Heart right ventricle (tissue), 16 donors: ENCODE measurements at regions of chr1 and their contacts with region 1.

Region 1: DNA sequence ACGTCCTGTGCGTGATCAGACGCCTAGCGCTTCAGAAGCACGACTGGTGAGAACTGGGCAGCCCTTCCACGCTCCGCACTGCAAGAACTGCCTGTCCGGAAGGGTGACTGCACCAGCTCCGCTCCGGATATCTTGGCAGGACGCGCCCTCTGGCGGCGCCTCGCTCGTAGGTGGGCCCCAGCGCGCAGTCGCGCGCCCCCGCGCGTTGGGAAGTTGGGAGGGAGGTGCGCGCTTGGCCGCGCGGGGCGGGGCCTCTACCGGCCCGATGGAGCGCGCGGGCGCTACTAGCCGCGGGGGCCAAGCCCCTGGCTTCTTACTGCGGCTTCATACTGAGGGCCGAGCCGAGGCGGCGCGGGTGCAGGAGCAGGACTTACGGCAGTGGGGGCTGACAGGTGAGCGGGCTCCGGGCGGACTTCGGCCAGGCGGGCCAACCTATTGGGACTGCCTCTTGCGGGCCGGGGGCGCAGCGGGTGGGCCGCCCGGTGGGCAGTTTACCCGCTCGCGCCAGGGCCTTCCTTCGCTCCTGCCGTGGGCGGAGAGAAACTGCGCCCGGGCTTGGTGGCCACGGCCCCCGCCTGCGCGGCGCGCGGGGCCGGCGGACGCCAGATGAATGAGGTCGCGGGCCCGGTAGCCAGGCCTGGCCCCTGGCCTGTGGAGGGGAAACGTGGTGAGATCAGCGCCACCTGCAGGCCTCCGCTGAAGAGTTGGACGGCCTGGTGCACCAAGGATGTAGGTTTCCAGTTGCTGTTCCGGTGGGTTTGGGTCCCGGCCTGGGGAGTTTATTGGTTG is at the start of gene CHD1L:
- DNase-seq: peak; percentile 94 to 96
- ATAC-seq: peak; percentile 97 to 99 (median 98)
- H3K4me3 ChIP-seq: peak within 1 kb of the TSS; percentile 71 to 99 (median 91)
- H3K27ac ChIP-seq: peak within 1 kb of the TSS; percentile 21 to 97 (median 91)
- H3K4me1 ChIP-seq: peaks cover 0 to 47% (median 19%) of the 10 kb centered on the region in 9 donors
- H3K27me3 ChIP-seq: no peaks in the 10 kb centered on the region
- CTCF ChIP-seq: peak; percentile 63 to 94 (median 84)
- total RNA-seq, gene CHD1L: 6.0 to 12.9 (median 7.9) TPM

Region 2: GRCh38 chr1:147172168-147172992 is 70.3 kb before region 1 on chr1 and contains the start of gene PRKAB2:
- intact Hi-C with region 1: loop called (anchors 1 to 5 kb)
- DNase-seq: peak; percentile 96
- ATAC-seq: peak; percentile 95 to 99 (median 97)
- H3K4me3 ChIP-seq: peak within 1 kb of the TSS; percentile 58 to 99 (median 90)
- H3K27ac ChIP-seq: peak within 1 kb of the TSS; percentile 74 to 98 (median 94)
- H3K4me1 ChIP-seq: peaks cover 3 to 60% (median 47%) of the 10 kb centered on the region in 9 donors
- H3K27me3 ChIP-seq: no peaks in the 10 kb centered on the region
- CTCF ChIP-seq: peak; percentile 84 to 100 (median 96)
- total RNA-seq, gene PRKAB2: 23.2 to 40.2 (median 34.9) TPM

Region 3: DNA sequence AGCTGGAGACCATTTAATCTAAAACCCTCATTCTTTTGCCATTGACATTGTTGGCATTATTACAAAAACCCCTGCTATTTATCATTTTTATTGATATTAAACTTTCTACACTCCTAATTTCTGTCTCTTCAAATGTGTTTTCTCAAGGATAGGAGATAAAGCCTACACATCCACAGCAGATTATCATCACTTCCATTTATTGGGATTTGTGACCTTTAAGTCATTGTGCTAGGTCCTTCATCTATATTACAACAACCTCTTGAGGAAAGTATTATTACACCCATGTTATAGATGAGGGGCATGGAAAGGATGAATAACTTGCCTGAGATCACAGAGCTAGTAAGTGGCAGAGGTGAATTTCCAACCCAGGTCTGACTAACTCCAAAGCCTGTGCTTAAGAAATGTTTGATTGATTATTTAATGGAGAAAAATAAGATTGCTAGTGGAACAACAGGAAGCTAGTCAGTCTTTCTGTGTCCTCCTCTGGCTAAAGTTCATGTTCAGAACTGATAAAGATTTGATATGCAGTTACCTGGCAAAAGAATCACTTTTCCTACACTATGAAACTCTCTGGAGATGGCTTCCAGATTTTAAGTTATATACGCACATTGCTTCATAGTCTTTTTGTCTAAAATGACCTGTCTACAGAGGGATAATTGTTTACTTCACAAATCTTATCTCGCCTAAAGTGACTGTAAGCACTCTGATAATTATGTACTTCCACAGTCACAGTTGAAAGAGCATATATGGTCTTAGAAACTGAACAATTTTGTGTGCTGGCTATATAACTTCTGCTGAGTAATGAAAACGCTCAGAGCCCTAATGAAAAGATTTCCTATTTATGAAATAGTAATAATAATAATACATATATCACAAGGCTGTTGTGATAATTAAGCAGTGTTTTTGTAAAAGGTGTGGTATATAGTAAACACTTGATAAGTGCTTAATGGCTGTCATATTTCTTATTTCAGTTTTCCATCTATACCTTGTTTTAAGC is 32.5 kb before region 1 on chr1:
- intact Hi-C with region 1: loop called in 1 of 10 experiments (anchors 2 kb)
- DNase-seq: no peak
- ATAC-seq: no peak
- H3K4me3 ChIP-seq: no peak overlapping the region
- H3K27ac ChIP-seq: no peak overlapping the region
- H3K4me1 ChIP-seq: no peaks in the 10 kb centered on the region
- H3K27me3 ChIP-seq: no peaks in the 10 kb centered on the region
- CTCF ChIP-seq: no peak

Region 4: DNA sequence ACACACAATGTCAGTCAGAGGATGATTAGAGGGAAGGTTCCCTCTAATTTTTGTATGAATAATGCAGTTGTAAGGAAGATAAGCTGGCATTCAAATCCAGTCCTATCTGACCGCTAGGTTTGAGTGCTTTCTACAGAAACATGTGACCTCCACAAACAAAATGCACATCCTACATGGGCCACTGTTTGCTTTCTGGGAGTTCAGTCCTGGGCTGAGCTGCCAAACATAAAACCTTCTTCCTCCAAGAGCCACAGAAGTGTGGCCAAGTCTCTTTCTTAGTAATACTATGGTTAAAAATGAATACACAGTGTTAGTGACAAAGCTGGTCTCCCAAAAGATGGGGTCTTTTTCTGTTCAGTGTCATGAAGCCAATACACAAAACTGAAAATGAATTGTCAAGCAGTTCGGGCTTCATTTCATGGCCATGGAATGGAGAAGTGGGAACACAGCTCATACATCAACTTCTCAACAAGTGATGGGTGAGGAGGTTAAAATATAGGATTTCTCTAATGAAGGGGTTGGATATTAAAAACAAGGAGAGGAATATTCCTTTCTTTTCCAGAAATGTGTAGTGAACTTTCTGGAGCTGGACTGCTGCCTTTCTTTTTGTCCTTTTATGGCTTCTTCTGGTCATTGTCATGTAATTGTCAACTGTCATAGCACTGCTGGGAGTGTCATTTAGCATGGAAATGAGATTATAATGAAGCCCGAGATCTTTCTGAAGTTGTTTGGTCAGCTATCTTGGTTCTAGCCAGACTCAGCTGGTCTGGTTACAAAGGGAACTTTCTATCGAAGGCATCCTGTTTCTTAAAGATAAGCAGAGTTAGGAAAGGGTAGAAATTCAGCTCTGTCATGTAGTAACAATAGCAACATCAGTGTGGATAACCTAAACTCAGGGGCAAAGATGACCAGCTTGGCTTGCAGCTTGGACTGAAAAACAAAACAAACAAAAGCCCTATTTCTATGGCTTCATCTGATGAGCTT is 134.9 kb after region 1 on chr1:
- intact Hi-C with region 1: no loop called
- DNase-seq: no peak
- ATAC-seq: no peak
- H3K4me3 ChIP-seq: no peak overlapping the region
- H3K27ac ChIP-seq: no peak overlapping the region
- H3K4me1 ChIP-seq: no peaks in the 10 kb centered on the region
- H3K27me3 ChIP-seq: no peaks in the 10 kb centered on the region
- CTCF ChIP-seq: no peak